ENCODE measurements at regions of chr12 and their contacts with region 1.

Region 1: GRCh38 chr12:101697197-101697929 is at the start of gene CHPT1:
- DNase-seq: peak; percentile 78
- ATAC-seq: peak; percentile 78
- H3K4me3 Mint-ChIP-seq: peak within 1 kb of the TSS; percentile 94
- H3K27ac Mint-ChIP-seq: peak within 1 kb of the TSS; percentile 93
- H3K4me1 Mint-ChIP-seq: peaks cover 60% of the 10 kb centered on the region
- H3K27me3 Mint-ChIP-seq: no peaks in the 10 kb centered on the region
- CTCF ChIP-seq: no peak
- total RNA-seq, gene CHPT1: 36.8 and 42.7 TPM in 2 replicates

Region 2: GRCh38 chr12:101407436-101408345 is 289.7 kb before region 1 on chr12 and contains the start of gene ARL1:
- CTCF ChIA-PET with region 1: no interaction called
- POLR2A ChIA-PET with region 1: interaction called, 4 read pairs
- intact Hi-C with region 1: loop called (anchors 2 kb)
- DNase-seq: peak; percentile 74
- ATAC-seq: peak; percentile 87
- H3K4me3 Mint-ChIP-seq: peak within 1 kb of the TSS; percentile 99
- H3K27ac Mint-ChIP-seq: peak within 1 kb of the TSS; percentile 97
- H3K4me1 Mint-ChIP-seq: peaks cover 24% of the 10 kb centered on the region
- H3K27me3 Mint-ChIP-seq: no peaks in the 10 kb centered on the region
- CTCF ChIP-seq: no peak
- total RNA-seq, gene ARL1: 45.4 and 49.5 TPM in 2 replicates

Region 3: DNA sequence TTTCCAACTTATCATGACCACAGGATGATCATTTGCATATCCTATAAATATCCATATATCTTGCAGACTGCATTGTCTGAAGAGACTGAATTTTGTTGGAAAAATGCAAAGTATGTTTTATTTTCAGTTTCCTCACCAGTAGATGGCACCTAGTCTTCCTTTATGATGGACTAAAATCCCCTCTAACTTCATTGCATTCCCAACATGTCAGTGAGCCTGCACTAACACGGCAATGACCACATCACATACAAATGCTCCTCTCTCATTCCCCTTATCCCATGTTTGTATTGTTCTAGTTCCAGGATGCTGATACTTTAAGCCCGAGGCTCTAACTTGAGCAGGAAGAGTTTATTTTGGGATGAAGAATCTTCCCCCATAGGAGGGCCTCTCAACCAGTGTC is 127.3 kb before region 1 on chr12:
- CTCF ChIA-PET with region 1: no interaction called
- POLR2A ChIA-PET with region 1: no interaction called
- intact Hi-C with region 1: loop called (anchors 5 kb)
- DNase-seq: no peak
- ATAC-seq: peak; percentile 34
- H3K4me3 Mint-ChIP-seq: no peak overlapping the region
- H3K27ac Mint-ChIP-seq: no peak overlapping the region
- H3K4me1 Mint-ChIP-seq: peaks cover 4% of the 10 kb centered on the region
- H3K27me3 Mint-ChIP-seq: peaks cover 7% of the 10 kb centered on the region
- CTCF ChIP-seq: no peak

Region 4: DNA sequence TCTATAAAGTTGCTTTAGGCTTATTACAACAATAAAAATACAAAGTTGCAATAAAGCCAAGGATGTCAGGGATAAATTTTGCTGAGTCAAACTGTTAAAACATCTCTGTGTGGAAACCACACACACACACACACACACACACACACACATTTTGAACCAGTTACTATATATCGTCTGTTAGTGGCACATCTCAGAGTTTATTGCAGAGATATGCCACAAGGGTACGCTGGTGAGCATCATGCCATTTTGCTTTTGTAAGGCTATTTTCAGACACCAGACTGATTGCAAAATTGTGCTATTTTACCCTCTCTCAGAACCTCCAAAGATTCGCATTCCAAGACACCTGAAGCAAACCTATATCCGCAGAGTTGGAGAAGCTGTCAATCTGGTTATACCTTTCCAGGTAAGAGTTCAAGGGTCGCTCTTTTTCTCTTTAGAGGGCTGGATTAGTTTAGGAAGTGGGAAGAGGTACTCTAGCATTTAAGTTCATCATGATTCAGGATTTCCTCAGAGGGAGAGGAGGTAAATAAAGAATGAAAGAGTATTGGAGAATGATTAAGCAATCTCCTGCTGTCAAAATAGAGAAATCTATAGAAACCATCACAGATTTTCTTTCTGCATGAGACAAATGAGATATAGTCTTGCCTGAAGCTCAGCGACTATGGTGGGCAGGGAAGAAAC is 27.2 kb before region 1 on chr12:
- CTCF ChIA-PET with region 1: interaction called, 5 read pairs
- POLR2A ChIA-PET with region 1: interaction called, 6 read pairs
- intact Hi-C with region 1: loop called (anchors 1 kb)
- DNase-seq: no peak
- ATAC-seq: peak; percentile 53
- H3K4me3 Mint-ChIP-seq: no peak overlapping the region
- H3K27ac Mint-ChIP-seq: no peak overlapping the region
- H3K4me1 Mint-ChIP-seq: peaks cover 21% of the 10 kb centered on the region
- H3K27me3 Mint-ChIP-seq: no peaks in the 10 kb centered on the region
- CTCF ChIP-seq: no peak

Region 5: GRCh38 chr12:101743724-101744472 is 46.5 kb after region 1 on chr12:
- CTCF ChIA-PET with region 1: interaction called, 5 read pairs
- POLR2A ChIA-PET with region 1: interaction called, 31 read pairs
- intact Hi-C with region 1: loop called (anchors 1 kb)
- DNase-seq: peak; percentile 54
- ATAC-seq: peak; percentile 88
- H3K4me3 Mint-ChIP-seq: peak overlapping the region; percentile 36
- H3K27ac Mint-ChIP-seq: peak overlapping the region; percentile 96
- H3K4me1 Mint-ChIP-seq: peaks cover 69% of the 10 kb centered on the region
- H3K27me3 Mint-ChIP-seq: no peaks in the 10 kb centered on the region
- CTCF ChIP-seq: no peak

Region 6: DNA sequence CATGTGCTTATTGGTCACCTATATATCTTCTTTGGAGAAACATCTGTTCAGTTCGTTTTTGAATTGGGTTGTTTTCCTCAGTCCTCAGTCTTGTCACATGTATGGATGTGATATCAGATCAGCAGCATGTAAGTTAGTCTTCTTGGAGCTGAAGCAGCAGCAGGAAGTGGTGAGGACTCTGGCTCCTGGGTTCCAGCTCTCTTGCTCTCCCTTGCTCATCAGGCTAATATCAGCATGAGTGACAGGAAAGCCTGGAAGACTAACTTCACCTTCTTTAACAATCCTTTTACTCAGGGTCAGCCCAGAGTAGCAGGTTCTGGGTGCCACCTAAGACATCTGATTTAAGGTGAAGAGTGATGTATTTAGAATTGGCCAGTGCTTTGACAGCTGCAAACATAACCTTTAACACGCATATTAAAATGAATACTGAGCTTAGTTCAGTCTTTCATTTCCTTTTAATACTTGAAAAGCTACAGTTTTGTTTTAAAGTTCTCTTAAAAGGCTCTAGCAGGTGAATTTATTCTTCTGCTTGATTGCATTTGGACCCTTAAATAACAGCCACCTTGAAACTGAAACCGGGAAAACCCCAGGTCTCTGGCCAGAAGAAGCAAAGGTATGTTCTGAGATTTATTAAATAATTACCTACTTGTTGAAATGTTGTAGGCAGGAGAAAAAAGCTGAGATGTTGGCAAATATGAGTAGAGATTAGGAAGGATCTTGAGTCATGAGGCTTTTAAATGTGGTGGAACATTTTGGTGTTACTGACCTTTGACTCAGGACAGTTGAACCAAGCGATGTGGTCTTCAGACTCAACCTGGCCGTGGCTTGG is 234.3 kb after region 1 on chr12:
- CTCF ChIA-PET with region 1: no interaction called
- POLR2A ChIA-PET with region 1: interaction called, 5 read pairs
- intact Hi-C with region 1: loop called (anchors 1 kb)
- DNase-seq: no peak
- ATAC-seq: peak; percentile 63
- H3K4me3 Mint-ChIP-seq: peak overlapping the region; percentile 33
- H3K27ac Mint-ChIP-seq: peak overlapping the region; percentile 82
- H3K4me1 Mint-ChIP-seq: peaks cover 87% of the 10 kb centered on the region
- H3K27me3 Mint-ChIP-seq: no peaks in the 10 kb centered on the region
- CTCF ChIP-seq: no peak

Region 7: GRCh38 chr12:103313894-103314293 is 1616.5 kb after region 1 on chr12:
- CTCF ChIA-PET with region 1: no interaction called
- POLR2A ChIA-PET with region 1: no interaction called
- intact Hi-C with region 1: no loop called
- DNase-seq: no peak
- ATAC-seq: no peak
- H3K4me3 Mint-ChIP-seq: no peak overlapping the region
- H3K27ac Mint-ChIP-seq: peak overlapping the region; percentile 67
- H3K4me1 Mint-ChIP-seq: peaks cover 15% of the 10 kb centered on the region
- H3K27me3 Mint-ChIP-seq: no peaks in the 10 kb centered on the region
- CTCF ChIP-seq: no peak

Measured in activated B cell treated with CpG ODN at 0.5 μM for 24 hours (primary cell).